Common myeloid progenitor, CD34-positive (primary cell): ENCODE measurements at regions of chr6 and their contacts with region 1.

Region 1: DNA sequence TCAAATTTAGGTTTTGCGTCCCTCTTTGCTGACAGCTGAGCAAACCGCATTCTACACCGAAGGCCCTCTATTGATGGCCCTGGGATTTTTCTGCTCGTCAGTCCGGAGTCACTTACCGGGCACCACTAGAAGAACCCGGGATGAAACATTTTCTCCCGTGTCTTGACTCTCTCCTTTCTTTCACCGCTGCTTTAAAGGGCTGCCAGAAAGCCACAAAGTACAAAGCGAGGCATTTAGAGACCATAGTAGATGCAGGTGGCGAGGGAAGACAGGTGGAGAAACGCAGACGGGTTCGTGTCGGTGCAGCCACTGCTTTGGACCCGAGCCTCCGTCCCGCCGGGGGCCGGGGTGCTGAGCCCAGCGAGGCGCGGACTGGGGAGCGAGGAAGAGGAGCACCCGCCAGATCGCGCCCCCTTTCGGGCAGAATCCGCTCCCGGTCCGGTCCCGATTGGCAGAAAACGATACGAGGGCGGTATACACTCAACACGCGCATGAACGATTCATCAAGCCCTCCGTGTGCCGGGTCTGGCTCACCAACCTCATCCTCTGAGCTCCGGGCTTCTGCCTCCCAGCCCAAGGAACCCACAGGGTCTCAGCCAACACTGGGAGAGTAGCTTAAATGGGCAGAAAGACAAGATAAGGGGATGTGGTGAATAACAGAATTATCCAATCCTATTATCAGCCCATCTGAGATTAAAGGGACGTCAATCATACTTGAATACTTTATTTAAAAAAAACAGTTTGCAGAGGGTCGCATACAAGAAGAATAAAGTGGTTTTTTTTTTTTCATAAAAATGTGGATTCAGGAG is 84.9 kb downstream of the TRIM27 start:
- DNase-seq: peak; percentile 88 to 91 (median 88)
- H3K4me3 ChIP-seq: peak overlapping the region; percentile 68 to 95 (median 89)
- H3K27ac ChIP-seq: peak overlapping the region in 1 of 2 experiments; percentile 82
- H3K4me1 ChIP-seq: peaks cover 13 to 27% (median 17%) of the 10 kb centered on the region in 4 experiments
- H3K27me3 ChIP-seq: peaks cover 2 to 35% (median 6%) of the 10 kb centered on the region in 5 experiments

Region 2: GRCh38 chr6:28695715-28696114 is 143.1 kb before region 1 on chr6:
- CTCF ChIA-PET with region 1: no interaction called
- POLR2A ChIA-PET with region 1: no interaction called
- DNase-seq: peak in 1 of 3 donors; percentile 58
- H3K4me3 ChIP-seq: no peak overlapping the region
- H3K27ac ChIP-seq: no peak overlapping the region
- H3K4me1 ChIP-seq: peaks cover 0 to 2% (median 0%) of the 10 kb centered on the region in 4 experiments
- H3K27me3 ChIP-seq: peaks cover 25 to 88% (median 42%) of the 10 kb centered on the region in 5 experiments

Region 3: GRCh38 chr6:28865401-28866204 is 26.8 kb after region 1 on chr6:
- CTCF ChIA-PET with region 1: interaction called, 11 read pairs
- POLR2A ChIA-PET with region 1: interaction called, 7 read pairs
- DNase-seq: peak; percentile 44 to 78 (median 64)
- H3K4me3 ChIP-seq: peak overlapping the region in 5 of 7 experiments; percentile 32 to 87 (median 73)
- H3K27ac ChIP-seq: no peak overlapping the region
- H3K4me1 ChIP-seq: peaks cover 2 to 30% (median 15%) of the 10 kb centered on the region in 4 experiments
- H3K27me3 ChIP-seq: no peaks in the 10 kb centered on the region

Region 4: GRCh38 chr6:28940858-28941680 is 102.2 kb after region 1 on chr6:
- CTCF ChIA-PET with region 1: interaction called, 12 read pairs
- POLR2A ChIA-PET with region 1: no interaction called
- DNase-seq: peak; percentile 82 to 92 (median 92)
- H3K4me3 ChIP-seq: peak overlapping the region; percentile 62 to 98 (median 80)
- H3K27ac ChIP-seq: peak overlapping the region in 1 of 2 experiments; percentile 77
- H3K4me1 ChIP-seq: peaks cover 11 to 48% (median 28%) of the 10 kb centered on the region in 4 experiments
- H3K27me3 ChIP-seq: no peaks in the 10 kb centered on the region

Region 5: DNA sequence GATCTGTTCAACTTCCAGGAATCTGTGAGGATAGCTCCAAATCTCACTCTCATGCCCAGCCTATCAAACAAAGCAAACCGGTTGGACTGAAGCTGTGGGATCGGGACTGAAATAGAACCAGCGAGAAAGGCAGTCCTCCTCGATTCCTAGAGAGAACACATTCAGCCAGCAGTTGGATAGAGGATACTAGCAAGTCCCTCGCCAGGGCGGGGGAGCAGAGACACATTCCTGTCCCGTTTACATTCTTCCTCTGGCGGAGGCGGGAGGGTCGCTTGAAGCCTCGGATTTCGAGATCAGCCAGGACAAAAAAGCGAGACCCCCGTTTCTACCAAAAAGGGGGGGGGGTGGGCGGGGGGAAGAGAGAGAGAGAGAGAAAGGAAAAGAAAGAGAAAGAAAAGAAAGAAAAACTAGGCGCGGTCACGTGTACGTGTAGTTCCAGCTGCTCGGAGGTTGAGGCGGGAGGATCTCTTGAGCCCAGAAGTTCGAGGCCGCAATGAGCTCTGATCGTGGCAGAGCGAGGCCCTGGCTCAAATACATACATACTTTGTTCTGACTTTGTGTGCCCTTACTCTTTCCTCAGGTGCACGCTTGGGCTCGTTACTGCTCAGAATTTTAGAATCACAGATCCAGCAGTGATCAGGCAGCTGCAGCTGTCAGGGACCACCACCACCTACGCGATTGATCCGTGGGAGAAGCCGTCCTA is 146.8 kb after region 1 on chr6:
- CTCF ChIA-PET with region 1: interaction called, 16 read pairs
- POLR2A ChIA-PET with region 1: no interaction called
- DNase-seq: peak; percentile 88 to 92 (median 89)
- H3K4me3 ChIP-seq: peak overlapping the region in 6 of 7 experiments; percentile 43 to 80 (median 58)
- H3K27ac ChIP-seq: no peak overlapping the region
- H3K4me1 ChIP-seq: peaks cover 7 to 29% (median 16%) of the 10 kb centered on the region in 4 experiments
- H3K27me3 ChIP-seq: peaks cover 0 to 6% (median 0%) of the 10 kb centered on the region in 5 experiments

Region 6: DNA sequence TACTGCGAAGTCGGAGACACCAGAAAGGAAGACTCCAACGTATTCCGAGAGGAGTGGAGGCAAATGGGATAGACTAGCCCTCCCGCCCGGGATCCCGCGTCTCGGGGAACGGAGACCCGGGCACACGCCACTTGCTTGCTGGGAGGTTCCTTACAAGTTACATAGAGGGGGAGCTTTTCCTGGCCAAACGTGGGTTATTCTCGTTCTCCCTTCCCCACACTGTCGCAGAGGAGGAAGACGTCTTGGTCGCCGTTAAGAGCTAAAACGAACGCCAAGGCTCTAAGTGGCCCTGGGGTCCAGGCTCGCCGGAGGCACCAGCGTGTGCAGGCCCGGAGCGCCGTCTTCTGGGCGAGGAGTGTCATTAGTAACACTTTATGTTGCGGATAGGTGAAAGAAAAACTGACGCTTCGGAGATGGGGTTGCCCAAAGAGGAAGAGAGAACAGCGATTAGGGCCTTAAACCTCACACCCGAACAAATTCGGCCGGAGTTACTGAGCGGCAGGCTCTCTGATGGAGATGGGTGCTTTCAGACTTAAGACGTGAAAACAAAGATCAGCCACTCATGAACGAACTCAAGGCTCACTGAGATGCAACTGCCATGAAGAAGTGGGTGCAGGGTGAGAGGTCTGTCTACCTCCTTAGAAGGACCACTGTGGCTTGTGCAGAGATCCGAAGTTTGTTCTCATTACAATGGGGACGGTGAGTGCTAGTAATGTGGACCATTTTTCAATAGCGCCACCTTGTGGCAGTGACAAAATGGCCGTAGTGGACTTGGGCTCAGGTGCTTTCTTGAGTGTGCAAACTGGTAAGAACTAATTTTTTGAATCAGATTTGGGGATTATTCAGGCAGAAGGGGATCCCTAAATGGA is 178.0 kb after region 1 on chr6:
- CTCF ChIA-PET with region 1: interaction called, 40 read pairs
- POLR2A ChIA-PET with region 1: interaction called, 3 read pairs
- DNase-seq: peak; percentile 87 to 90 (median 89)
- H3K4me3 ChIP-seq: peak overlapping the region; percentile 45 to 84 (median 77)
- H3K27ac ChIP-seq: no peak overlapping the region
- H3K4me1 ChIP-seq: peaks cover 8 to 15% (median 11%) of the 10 kb centered on the region in 4 experiments
- H3K27me3 ChIP-seq: peaks cover 8 to 36% (median 13%) of the 10 kb centered on the region in 5 experiments